Ascending aorta (tissue), 2 donors: ENCODE measurements at regions of chr18 and their contacts with region 1.

Region 1: DNA sequence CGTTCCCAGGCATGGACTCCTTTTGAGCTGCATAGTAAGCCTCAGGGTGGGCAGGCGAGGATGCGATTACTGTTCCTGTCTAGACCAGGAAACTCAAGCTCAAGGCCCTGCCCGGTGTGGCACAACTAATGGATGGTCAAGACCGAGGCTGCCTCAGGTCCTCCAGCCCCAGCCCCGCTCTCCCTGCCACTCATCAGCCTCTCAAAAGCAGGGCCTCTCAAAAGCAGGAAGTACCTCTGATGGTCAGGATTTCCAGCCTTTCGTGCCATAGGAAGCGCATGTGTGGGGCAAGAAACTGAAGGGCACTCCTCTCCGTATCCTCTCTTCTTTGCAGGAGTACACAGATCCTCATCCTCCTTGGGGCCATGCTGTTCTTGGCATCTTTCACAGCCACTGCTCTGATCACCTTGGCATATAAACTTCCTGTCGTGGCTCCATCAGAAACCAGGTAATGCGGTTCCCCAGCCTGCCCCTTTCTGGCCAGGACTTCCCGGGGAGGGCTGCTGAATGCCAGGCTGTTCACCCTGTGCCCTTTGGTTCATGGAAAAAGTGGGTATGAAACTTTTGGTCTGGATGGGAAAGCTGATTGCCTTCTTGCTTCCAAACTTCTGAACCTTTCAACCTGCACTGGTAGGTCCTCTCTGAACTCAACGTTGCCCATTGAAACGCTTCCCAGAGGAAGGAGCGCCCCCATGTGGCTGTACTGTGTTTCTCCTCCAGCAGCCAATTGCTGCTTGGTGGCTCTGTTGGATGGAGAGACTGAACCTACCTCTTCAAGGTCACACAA is 82.8 kb upstream of the SEC11C start:
- DNase-seq: peak in 1 of 2 donors; percentile 85
- H3K4me3 ChIP-seq: no peak overlapping the region
- H3K27ac ChIP-seq: peak overlapping the region; percentile 63 to 83
- H3K4me1 ChIP-seq: peaks cover 9 to 33% of the 10 kb centered on the region in 2 donors
- H3K27me3 ChIP-seq: no peaks in the 10 kb centered on the region
- CTCF ChIP-seq: peak; percentile 73 to 78 (median 78)

Region 2: DNA sequence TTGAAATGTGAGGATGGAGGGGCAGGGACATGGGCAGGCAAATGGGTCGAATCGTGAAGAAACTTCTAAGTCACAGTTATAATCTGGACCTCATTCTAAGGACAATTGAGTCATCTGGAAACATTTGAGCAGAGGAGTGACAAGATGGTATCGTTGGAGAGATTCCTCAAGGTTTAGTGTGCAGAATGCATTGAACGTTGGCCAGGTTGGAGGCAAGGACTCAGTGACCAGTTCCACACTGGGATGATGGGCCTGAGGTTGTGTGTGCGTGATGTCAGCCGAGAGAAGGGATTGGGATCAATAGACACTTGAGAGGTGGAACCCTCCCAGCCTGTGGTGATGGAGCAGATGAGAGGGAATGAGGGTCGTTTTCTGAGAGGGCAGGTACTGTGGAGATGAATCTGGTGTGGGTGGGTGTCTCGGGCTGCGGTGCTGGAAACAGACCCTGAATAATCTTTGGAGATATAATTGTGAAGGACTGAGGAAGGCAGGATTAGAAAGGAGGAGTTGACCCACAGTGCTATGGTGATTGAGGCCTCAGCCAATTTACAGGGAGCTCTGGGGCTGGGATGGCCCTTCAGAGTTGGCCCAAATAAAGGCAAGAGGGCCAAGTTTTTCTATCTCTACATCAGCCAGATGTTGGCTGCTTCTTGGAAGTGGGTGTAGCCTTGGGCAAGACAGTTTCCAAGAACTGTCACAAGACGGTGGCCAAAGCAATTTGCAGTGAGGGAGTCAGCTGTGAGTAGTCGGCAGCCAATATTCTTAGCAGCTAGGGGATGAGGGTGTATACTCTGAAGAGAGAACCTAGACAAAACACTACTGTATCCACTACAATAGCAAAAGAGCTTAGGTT is 198.1 kb before region 1 on chr18:
- intact Hi-C with region 1: loop called (anchors 2 kb)
- DNase-seq: peak in 1 of 2 donors; percentile 79
- H3K4me3 ChIP-seq: no peak overlapping the region
- H3K27ac ChIP-seq: peak overlapping the region; percentile 86 to 100
- H3K4me1 ChIP-seq: peaks cover 7 to 39% of the 10 kb centered on the region in 2 donors
- H3K27me3 ChIP-seq: no peaks in the 10 kb centered on the region
- CTCF ChIP-seq: no peak

Region 3: DNA sequence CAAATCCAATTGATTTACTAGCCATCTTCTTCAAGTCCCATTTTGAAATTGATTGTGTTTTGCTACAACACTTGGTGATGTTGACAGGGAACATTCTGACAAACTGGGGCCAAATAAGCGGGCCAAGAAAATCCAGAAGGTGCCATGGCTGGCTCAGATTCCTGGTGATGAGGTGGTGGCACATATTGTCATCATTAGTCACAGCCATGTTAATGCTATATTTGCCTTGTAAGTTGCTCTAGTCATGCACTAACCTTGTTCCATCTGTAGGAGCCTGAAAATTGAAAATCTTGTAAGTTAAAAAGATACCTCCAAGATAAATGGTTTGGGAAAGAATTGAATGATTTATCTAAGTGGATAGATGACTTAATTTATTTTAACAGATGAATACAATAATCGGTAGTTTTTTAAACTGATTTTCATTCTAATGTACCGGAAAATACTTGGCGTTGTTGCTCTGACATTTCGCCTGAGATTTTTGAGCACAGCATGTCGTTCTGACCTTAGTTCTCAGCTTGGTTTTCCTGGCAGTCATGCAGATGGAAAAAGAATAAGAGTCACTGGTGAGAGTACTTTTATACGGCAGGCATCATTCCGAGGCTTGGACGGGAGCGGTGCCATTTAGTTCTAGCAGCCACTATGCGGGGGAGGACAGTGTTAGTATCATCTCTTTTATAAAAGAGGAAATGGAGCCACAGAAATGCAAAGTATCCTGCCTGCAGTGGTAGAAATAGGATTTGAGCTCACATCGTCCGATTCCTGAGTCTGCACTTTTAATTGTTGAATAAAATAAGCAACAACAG is 58.3 kb before region 1 on chr18:
- intact Hi-C with region 1: loop called (anchors 2 kb)
- DNase-seq: peak in 1 of 2 donors; percentile 91
- H3K4me3 ChIP-seq: peak overlapping the region in 1 of 2 donors; percentile 12
- H3K27ac ChIP-seq: peak overlapping the region; percentile 93 to 95
- H3K4me1 ChIP-seq: peaks cover 9 to 37% of the 10 kb centered on the region in 2 donors
- H3K27me3 ChIP-seq: no peaks in the 10 kb centered on the region
- CTCF ChIP-seq: peak in 1 of 3 experiments; percentile 41